HepG2 (cell line): ENCODE measurements at regions of chr16 and their contacts with region 1.

Region 1: DNA sequence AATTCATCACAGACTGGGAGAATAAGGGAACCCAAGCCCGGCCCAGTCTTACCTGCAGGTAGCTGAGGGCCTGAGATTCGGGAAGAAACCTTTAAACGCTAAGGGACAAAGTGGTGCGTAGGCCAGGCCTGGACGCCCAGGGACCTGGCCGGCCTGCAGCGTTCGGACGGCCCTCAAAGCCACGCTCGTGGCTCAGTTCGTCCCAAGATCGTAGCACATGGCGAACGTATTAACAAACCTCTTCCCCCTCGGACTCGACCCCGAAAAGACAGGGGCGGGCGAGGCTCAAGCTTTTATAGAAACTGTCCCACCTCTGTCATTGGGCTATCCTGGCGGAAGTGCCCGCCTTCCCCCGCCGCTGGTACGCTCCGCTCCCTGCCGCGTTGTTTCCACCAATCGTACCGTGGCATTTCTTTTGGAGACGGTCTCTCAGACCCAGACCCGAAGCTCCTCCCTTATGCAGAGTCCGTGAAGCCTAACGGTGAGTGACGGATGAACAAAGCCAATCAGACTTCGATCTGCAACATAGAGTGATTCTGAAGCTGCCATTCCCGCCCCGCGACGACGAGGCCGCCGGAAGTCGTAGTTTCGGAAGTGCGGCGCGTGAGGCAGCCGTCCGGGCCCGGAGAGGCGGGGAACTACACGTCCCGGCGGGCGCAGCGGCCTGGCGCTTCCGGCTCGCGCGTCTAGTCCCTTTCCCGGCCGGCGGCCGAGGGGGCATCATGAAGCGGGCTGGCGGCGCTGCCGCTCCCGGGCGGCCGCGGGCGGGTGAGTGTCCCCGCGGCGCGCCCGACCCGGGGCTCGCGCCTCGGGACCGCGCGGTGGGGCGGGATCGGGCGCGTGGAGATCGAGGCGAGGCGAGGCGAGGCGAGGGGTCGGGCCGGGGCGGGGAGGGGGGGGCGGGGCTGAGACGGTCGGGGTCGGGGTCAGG is at the start of gene TRAF7:
- DNase-seq: peak; percentile 100
- ATAC-seq: peak; percentile 67
- H3K4me3 ChIP-seq: peak within 1 kb of the TSS; percentile 91 to 99 (median 98)
- H3K27ac ChIP-seq: peak within 1 kb of the TSS; percentile 85
- H3K4me1 ChIP-seq: peaks cover 74% of the 10 kb centered on the region
- H3K27me3 ChIP-seq: no peaks in the 10 kb centered on the region; a peak in 1 of 5 replicates
- CTCF ChIP-seq: no peak
- EP300 ChIP-seq: peak; percentile 4 to 14; a peak in 1 of 4 replicates
- POLR2A ChIP-seq: peak; percentile 100
- RAD21 ChIP-seq: peak; percentile 50
- total RNA-seq, gene TRAF7: 40.3 and 47.9 TPM in 2 replicates

Region 2: GRCh38 chr16:1991948-1992703 is 163.2 kb before region 1 on chr16:
- CTCF ChIA-PET with region 1: no interaction called
- POLR2A ChIA-PET with region 1: interaction called, 10 read pairs
- in situ Hi-C with region 1: no loop called
- intact Hi-C with region 1: no loop called
- DNase-seq: no peak
- ATAC-seq: no peak
- H3K4me3 ChIP-seq: no peak overlapping the region
- H3K27ac ChIP-seq: no peak overlapping the region
- H3K4me1 ChIP-seq: peaks cover 48% of the 10 kb centered on the region
- H3K27me3 ChIP-seq: peaks cover 0 to 8% of the 10 kb centered on the region in 2 experiments; a peak in 2 of 5 replicates
- CTCF ChIP-seq: no peak
- EP300 ChIP-seq: no peak
- POLR2A ChIP-seq: no peak
- RAD21 ChIP-seq: no peak

Region 3: DNA sequence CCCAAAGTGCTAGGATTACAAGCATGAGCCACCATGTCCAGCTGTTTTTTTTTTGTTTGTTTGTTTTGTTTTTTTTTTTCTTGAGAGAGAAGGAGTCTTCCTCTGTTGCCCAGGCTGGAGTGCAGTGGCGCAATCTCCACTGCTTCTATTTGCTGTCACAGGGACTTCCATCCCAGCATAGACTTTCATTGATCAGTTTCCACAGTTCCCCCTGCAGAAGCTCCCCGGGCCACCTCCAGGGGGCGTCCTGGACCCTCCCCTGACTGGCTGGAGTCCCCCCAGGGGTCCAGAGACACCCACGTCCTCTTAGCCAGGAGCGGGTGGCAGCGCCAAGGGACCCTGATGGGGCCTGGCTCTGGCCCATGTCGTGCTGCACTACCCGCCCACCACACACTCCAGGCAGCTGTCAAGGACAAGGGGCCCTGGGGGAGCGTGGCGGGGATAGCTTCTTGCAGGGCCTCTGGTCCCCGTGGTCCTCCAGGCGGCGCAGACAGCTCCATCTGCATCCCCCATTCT is 138.9 kb before region 1 on chr16:
- CTCF ChIA-PET with region 1: no interaction called
- POLR2A ChIA-PET with region 1: interaction called, 22 read pairs
- in situ Hi-C with region 1: no loop called
- intact Hi-C with region 1: no loop called
- DNase-seq: peak; percentile 41
- ATAC-seq: peak; percentile 52
- H3K4me3 ChIP-seq: no peak overlapping the region; a peak in 1 of 6 replicates
- H3K27ac ChIP-seq: no peak overlapping the region
- H3K4me1 ChIP-seq: peaks cover 62% of the 10 kb centered on the region
- H3K27me3 ChIP-seq: peaks cover 2 to 20% of the 10 kb centered on the region in 2 experiments; a peak in 2 of 5 replicates
- CTCF ChIP-seq: peak; percentile 79
- EP300 ChIP-seq: no peak
- POLR2A ChIP-seq: no peak
- RAD21 ChIP-seq: peak; percentile 21; the same call in 1 of the 2 replicates

Region 4: DNA sequence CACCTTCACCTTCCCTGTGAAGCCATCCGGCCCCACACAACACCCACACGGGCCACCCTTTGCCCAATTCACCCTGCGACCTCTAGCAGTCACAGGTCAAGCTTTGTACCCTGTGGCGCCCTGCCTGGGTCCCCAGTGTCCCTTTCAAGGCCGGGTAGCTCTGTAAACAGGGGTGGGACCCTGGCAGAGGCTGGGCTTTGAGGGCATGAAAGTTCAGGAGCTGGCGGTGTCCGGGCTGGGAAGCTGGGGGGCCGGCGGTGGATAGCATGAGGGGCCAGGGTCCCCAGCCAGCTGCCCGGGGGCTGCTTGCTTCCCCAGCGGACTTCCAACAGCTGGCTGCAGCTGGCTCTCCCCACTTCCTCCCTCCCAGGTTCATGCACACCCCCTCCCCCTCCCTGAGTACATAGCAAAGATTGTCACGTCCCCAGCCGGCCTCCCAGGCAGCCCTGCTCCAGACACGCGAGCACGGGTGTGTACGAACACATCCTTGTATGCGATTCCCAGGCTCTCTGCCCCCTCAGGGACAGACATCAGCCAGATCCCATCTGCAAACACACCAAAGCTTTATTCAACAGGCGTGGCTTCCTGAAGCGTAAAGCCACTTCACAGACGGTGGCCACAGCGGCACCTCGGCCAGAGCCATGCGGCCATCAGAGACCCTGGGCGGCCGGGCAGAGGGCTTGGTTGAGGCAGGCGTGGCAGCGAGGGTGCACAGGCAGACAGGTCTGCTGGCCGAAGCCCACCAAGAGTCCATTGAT is 115.9 kb before region 1 on chr16:
- CTCF ChIA-PET with region 1: no interaction called
- POLR2A ChIA-PET with region 1: interaction called, 16 read pairs
- in situ Hi-C with region 1: no loop called
- intact Hi-C with region 1: no loop called
- DNase-seq: peak; percentile 90
- ATAC-seq: peak; percentile 39
- H3K4me3 ChIP-seq: peak overlapping the region in 1 of 3 experiments; percentile 46; a peak in 3 of 6 replicates
- H3K27ac ChIP-seq: peak overlapping the region; percentile 86
- H3K4me1 ChIP-seq: peaks cover 78% of the 10 kb centered on the region
- H3K27me3 ChIP-seq: no peaks in the 10 kb centered on the region
- CTCF ChIP-seq: no peak; the same call in 1 of the 2 replicates
- EP300 ChIP-seq: peak in 1 of 2 experiments; percentile 36; a peak in 2 of 4 replicates
- POLR2A ChIP-seq: peak in 1 of 2 experiments; percentile 52; a peak in 3 of 4 replicates
- RAD21 ChIP-seq: 0 out of 2 replicates have a peak, but pooled peaks have one; percentile 11

Region 5: DNA sequence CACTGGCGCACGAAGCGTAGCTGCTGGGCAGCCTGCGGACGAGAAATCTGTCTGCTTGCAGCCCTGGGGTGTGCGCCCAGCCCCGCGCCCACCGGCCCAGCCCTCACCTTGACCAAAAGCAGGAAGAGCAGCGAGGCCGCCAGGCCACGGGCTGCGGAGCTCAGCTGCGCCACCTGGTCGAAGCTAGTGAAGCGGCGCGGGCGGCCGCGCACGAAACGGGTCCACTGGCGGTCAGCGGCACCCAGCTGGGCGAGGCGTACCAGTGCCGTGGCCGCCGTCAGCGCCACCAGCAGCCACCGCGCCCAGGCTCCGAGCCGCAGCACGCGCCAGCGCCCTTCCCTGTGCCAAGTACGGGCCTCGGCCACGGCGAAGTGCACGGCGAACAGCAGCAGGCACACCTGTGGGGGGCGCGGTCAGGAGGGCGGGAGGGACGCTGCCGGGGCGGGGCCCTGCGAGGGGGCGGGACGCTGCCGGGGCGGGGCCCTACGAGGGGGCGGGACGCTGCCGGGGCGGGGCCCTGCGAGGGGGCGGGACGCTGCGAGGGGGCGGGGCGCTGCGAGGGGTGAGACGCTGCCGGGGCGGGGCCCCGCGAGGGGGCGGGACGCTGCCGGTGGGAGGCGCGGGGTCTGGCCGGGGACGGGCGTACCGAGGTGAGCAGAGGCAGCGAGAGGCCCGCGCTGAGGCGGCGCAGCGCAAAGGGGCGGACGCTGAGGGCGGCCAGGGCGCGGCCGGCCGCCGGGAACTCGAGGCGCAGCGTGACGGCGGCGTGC is 64.4 kb before region 1 on chr16:
- CTCF ChIA-PET with region 1: no interaction called
- POLR2A ChIA-PET with region 1: no interaction called
- in situ Hi-C with region 1: no loop called
- intact Hi-C with region 1: no loop called
- DNase-seq: no peak
- ATAC-seq: no peak
- H3K4me3 ChIP-seq: no peak overlapping the region
- H3K27ac ChIP-seq: no peak overlapping the region
- H3K4me1 ChIP-seq: no peaks in the 10 kb centered on the region
- H3K27me3 ChIP-seq: no peaks in the 10 kb centered on the region
- CTCF ChIP-seq: no peak
- EP300 ChIP-seq: no peak
- POLR2A ChIP-seq: no peak
- RAD21 ChIP-seq: no peak

Region 6: GRCh38 chr16:2122429-2122828 is 32.9 kb before region 1 on chr16:
- CTCF ChIA-PET with region 1: no interaction called
- POLR2A ChIA-PET with region 1: no interaction called
- in situ Hi-C with region 1: no loop called
- intact Hi-C with region 1: no loop called
- DNase-seq: no peak
- ATAC-seq: no peak
- H3K4me3 ChIP-seq: no peak overlapping the region
- H3K27ac ChIP-seq: no peak overlapping the region
- H3K4me1 ChIP-seq: 0 out of 2 replicates have a peak, but pooled peaks cover 4% of the 10 kb centered on the region
- H3K27me3 ChIP-seq: no peaks in the 10 kb centered on the region
- CTCF ChIP-seq: no peak
- EP300 ChIP-seq: no peak
- POLR2A ChIP-seq: no peak
- RAD21 ChIP-seq: no peak

Region 7: GRCh38 chr16:2180962-2181923 is 25.9 kb after region 1 on chr16:
- CTCF ChIA-PET with region 1: no interaction called
- POLR2A ChIA-PET with region 1: interaction called, 31 read pairs
- in situ Hi-C with region 1: no loop called
- intact Hi-C with region 1: no loop called
- DNase-seq: no peak
- ATAC-seq: peak; percentile 40
- H3K4me3 ChIP-seq: no peak overlapping the region
- H3K27ac ChIP-seq: no peak overlapping the region
- H3K4me1 ChIP-seq: peaks cover 17% of the 10 kb centered on the region
- H3K27me3 ChIP-seq: no peaks in the 10 kb centered on the region
- CTCF ChIP-seq: no peak
- EP300 ChIP-seq: no peak
- POLR2A ChIP-seq: no peak
- RAD21 ChIP-seq: no peak

Region 8: DNA sequence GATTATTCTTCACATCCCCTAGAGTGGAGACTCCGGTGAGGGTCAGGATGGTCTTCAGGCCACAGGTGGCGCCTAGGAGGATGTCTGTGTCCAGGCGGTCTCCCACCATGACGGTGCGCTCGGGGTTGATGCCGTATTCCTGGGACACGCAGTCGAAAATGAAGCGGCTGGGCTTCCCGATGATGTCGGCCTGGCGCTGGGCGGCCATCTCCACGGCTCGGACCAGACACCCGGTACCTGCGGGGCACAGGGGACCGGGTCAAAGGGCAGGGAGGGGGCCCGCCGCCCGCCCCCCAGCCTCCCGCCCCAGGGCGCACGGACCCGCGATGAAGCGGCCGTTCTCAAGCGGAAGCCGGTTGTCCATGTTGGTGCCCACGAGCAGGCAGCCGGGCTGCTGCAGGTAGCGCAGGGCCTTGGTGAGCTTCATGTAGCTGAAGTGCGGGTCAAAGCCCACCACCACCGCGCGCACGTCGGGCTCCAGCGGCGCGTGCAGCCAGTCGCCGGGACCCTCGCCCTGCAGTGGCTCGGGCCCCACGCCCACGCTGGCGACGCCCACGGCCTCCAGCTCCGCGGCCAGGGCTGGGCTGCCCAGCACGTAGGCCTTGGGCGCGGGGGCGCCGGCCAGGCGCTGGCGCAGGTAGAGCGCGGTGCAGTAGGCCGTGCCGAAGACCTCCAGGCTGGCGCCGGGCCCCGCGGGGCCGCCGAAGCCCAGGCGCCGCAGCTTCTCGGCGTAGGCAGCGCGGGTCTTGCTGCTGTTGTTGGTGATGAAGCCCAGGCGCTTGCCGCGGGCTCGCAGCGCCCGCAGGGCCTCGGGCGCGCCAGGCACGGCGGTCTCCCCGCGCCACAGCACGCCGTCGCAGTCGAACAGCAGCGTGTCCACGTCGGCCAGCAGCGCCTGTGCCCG is 58.7 kb after region 1 on chr16:
- CTCF ChIA-PET with region 1: no interaction called
- POLR2A ChIA-PET with region 1: interaction called, 22 read pairs
- in situ Hi-C with region 1: no loop called
- intact Hi-C with region 1: no loop called
- DNase-seq: no peak
- ATAC-seq: no peak
- H3K4me3 ChIP-seq: peak overlapping the region; percentile 63 to 89 (median 69)
- H3K27ac ChIP-seq: peak overlapping the region; percentile 85
- H3K4me1 ChIP-seq: peaks cover 65% of the 10 kb centered on the region
- H3K27me3 ChIP-seq: no peaks in the 10 kb centered on the region; a peak in 1 of 5 replicates
- CTCF ChIP-seq: no peak
- EP300 ChIP-seq: no peak
- POLR2A ChIP-seq: no peak; a peak in 1 of 4 replicates
- RAD21 ChIP-seq: peak; percentile 44; the same call in 1 of the 2 replicates

Region 9: DNA sequence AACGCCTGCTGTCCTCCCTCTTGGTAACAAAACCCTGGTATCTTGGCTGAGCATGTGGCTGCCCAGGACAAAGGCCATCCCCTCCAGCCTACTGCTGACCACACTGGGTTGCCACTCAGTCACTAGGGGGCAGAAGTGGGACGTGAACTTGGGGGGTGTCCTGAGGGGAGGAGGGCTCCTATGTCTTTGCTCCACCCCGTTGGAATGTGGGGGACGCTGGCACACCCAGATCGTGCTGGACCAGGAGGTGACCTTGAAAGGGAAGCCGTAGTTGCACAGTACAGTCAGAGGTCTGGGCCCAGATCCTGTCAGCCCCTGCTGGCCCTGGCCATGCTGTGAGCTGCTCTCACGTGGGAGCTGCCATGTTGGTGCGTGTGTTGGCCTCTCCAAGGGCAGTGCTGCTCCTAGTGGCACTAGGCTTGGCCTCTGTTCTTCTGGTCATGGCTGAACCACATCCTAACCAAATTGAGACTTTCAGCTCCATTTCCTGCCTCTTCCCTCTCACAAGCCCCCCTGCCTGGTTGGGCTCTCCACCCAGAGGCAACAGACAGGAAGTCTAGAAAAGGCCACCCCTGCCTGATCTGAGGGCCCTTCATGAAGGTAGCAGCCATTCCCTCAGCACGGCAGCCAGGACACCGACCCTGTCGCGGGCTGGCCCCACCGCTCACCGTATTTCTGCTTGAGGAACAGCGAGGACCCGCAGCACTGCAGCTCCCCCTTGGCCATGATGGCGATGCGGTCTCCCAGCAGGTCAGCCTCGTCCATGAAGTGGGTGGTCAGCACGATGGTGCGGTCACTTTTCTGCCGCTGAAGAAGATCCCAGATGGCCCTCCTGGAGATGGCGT is 141.5 kb after region 1 on chr16:
- CTCF ChIA-PET with region 1: no interaction called
- POLR2A ChIA-PET with region 1: no interaction called
- in situ Hi-C with region 1: no loop called
- intact Hi-C with region 1: no loop called
- DNase-seq: peak; percentile 54
- ATAC-seq: peak; percentile 75
- H3K4me3 ChIP-seq: no peak overlapping the region
- H3K27ac ChIP-seq: no peak overlapping the region
- H3K4me1 ChIP-seq: peaks cover 10% of the 10 kb centered on the region
- H3K27me3 ChIP-seq: peaks cover 10 to 33% of the 10 kb centered on the region in 2 experiments; a peak in 4 of 5 replicates
- CTCF ChIP-seq: peak; percentile 78
- EP300 ChIP-seq: no peak
- POLR2A ChIP-seq: no peak
- RAD21 ChIP-seq: no peak

Region 10: DNA sequence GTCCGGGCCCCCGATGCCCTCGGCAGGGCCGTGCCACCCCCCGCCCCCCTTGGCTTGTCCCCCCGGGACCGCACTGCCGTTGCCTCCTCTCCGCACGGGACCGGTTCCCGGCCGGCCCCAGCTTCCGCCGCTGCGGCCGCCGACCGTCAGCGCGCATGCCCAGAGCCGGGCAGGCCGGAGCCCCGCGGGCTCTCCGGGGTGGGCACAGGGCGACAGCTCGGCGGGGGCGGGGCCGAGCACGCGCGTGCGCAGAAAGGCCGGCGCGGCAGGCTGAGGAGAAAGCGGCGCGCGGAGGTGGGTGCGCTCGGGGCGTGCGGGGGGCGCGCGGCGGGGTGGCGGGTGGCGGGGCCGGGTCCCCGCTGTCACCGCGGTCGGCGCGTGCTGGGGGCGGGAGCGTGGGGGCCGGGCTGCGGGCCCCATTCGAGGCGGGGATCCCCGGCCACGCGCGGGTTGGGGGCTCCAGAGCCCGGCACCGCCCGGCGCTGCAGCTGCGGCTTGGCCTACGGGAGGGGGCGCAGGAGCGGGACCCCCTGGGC is 319.6 kb after region 1 on chr16 and contains the start of gene TBC1D24:
- CTCF ChIA-PET with region 1: no interaction called
- POLR2A ChIA-PET with region 1: no interaction called
- in situ Hi-C with region 1: no loop called
- intact Hi-C with region 1: loop called (anchors 1 kb)
- DNase-seq: peak; percentile 67
- ATAC-seq: peak; percentile 54
- H3K4me3 ChIP-seq: peak within 1 kb of the TSS; percentile 79 to 92 (median 85)
- H3K27ac ChIP-seq: peak within 1 kb of the TSS; percentile 58
- H3K4me1 ChIP-seq: peaks cover 61% of the 10 kb centered on the region
- H3K27me3 ChIP-seq: peaks cover 7 to 9% of the 10 kb centered on the region in 2 experiments
- CTCF ChIP-seq: no peak
- EP300 ChIP-seq: no peak
- POLR2A ChIP-seq: peak in 1 of 2 experiments; percentile 50; a peak in 3 of 4 replicates
- RAD21 ChIP-seq: no peak
- total RNA-seq, gene TBC1D24: 13.7 and 17.6 TPM in 2 replicates